ENCODE measurements at regions of chr1 and their contacts with region 1.

Region 1: GRCh38 chr1:59061876-59062275 is 235.0 kb upstream of the FGGY start:
- DNase-seq: peak; percentile 66
- ATAC-seq: peak; percentile 79

Region 2: GRCh38 chr1:58783993-58784757 is 277.7 kb before region 1 on chr1 and contains the start of gene JUN:
- intact Hi-C with region 1: loop called (anchors 10 kb)
- DNase-seq: peak; percentile 99
- ATAC-seq: peak; percentile 83
- total RNA-seq, gene JUN: 54.6 TPM

Region 3: DNA sequence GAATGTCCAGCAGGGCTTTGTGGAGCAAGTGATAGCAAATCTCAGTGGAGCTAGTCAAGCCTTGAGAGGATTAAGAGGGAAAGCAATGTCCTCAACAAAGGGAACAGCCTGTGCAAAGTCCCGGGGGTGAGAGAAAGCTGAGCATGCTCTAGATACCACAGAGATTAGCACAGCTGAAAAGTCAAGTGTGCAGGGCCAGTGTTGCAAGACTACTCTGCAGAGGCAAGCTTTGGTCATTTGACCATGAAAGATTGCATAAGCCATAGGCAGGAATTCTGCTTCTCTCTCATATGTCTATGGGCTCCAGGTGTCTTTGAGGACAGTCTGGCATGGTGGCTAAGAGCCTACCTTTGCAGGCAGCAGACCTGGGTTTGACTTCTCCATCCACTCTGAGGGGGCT is 97.0 kb before region 1 on chr1:
- intact Hi-C with region 1: no loop called
- DNase-seq: no peak
- ATAC-seq: peak; percentile 49

Region 4: GRCh38 chr1:59150577-59151391 is 88.9 kb after region 1 on chr1:
- intact Hi-C with region 1: no loop called
- DNase-seq: peak; percentile 85
- ATAC-seq: peak; percentile 96

Measured in left ventricle myocardium superior (tissue), 1 donor.